ENCODE measurements at regions of chr3 and their contacts with region 1.

Region 1: GRCh38 chr3:31041161-31041978 is 146.9 kb upstream of the GADL1 start:
- DNase-seq: peak; percentile 91
- H3K4me3 Mint-ChIP-seq: no peak overlapping the region
- H3K27ac Mint-ChIP-seq: peak overlapping the region; percentile 81
- H3K4me1 Mint-ChIP-seq: peaks cover 47% of the 10 kb centered on the region
- H3K27me3 Mint-ChIP-seq: no peaks in the 10 kb centered on the region
- CTCF ChIP-seq: no peak

Region 2: GRCh38 chr3:31077021-31077601 is 35.7 kb after region 1 on chr3:
- CTCF ChIA-PET with region 1: interaction called, 3 read pairs
- POLR2A ChIA-PET with region 1: interaction called, 5 read pairs
- intact Hi-C with region 1: loop called (anchors 1 kb)
- DNase-seq: peak; percentile 85
- H3K4me3 Mint-ChIP-seq: no peak overlapping the region
- H3K27ac Mint-ChIP-seq: peak overlapping the region; percentile 4
- H3K4me1 Mint-ChIP-seq: peaks cover 18% of the 10 kb centered on the region
- H3K27me3 Mint-ChIP-seq: no peaks in the 10 kb centered on the region
- CTCF ChIP-seq: no peak

Region 3: GRCh38 chr3:31105438-31106077 is 64.2 kb after region 1 on chr3:
- CTCF ChIA-PET with region 1: no interaction called
- POLR2A ChIA-PET with region 1: interaction called, 46 read pairs
- intact Hi-C with region 1: loop called (anchors 1 kb)
- DNase-seq: peak; percentile 96
- H3K4me3 Mint-ChIP-seq: peak overlapping the region; percentile 54
- H3K27ac Mint-ChIP-seq: peak overlapping the region; percentile 72
- H3K4me1 Mint-ChIP-seq: peaks cover 52% of the 10 kb centered on the region
- H3K27me3 Mint-ChIP-seq: no peaks in the 10 kb centered on the region
- CTCF ChIP-seq: no peak

Measured in MCF 10A (cell line).